SK-N-SH (cell line): ENCODE measurements at regions of chr7 and their contacts with region 1.

Region 1: GRCh38 chr7:43260980-43261878 is 148.8 kb downstream of the HECW1 start:
- DNase-seq: peak; percentile 81
- H3K4me3 ChIP-seq: no peak overlapping the region; a peak in 1 of 4 replicates
- H3K27ac ChIP-seq: no peak overlapping the region
- H3K4me1 ChIP-seq: no peaks in the 10 kb centered on the region
- H3K27me3 ChIP-seq: peaks cover 9% of the 10 kb centered on the region; the same call in 1 of the 2 replicates
- CTCF ChIP-seq: peak; percentile 100
- EP300 ChIP-seq: no peak
- RAD21 ChIP-seq: peak; percentile 89

Region 2: DNA sequence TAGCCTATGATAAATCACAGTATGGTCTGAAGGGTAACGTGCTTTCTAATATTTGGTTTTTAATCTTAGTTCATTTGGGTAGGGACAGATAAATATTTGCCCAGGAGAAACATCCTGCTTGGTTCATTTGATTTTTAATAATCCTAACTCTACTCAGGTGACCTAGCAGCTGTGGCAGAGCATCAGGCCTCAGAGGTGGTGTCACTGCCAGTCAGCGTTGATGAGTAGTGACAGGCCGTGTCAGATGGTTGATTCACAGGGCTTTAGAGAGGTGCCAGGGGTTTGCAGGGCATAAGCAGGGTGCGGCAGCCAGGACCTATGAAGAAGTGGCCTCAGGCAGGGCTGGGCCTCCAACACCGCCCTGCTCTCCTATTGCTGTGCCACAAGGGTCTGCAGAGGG is 20.7 kb before region 1 on chr7:
- CTCF ChIA-PET with region 1: interaction called, 23 read pairs
- POLR2A ChIA-PET with region 1: no interaction called
- DNase-seq: no peak
- H3K4me3 ChIP-seq: no peak overlapping the region
- H3K27ac ChIP-seq: no peak overlapping the region
- H3K4me1 ChIP-seq: no peaks in the 10 kb centered on the region
- H3K27me3 ChIP-seq: peaks cover 35% of the 10 kb centered on the region
- CTCF ChIP-seq: no peak
- EP300 ChIP-seq: no peak
- RAD21 ChIP-seq: no peak

Region 3: GRCh38 chr7:43248961-43249822 is 12.0 kb before region 1 on chr7:
- CTCF ChIA-PET with region 1: interaction called, 61 read pairs
- POLR2A ChIA-PET with region 1: no interaction called
- DNase-seq: no peak
- H3K4me3 ChIP-seq: no peak overlapping the region
- H3K27ac ChIP-seq: no peak overlapping the region
- H3K4me1 ChIP-seq: no peaks in the 10 kb centered on the region
- H3K27me3 ChIP-seq: peaks cover 24% of the 10 kb centered on the region
- CTCF ChIP-seq: no peak
- EP300 ChIP-seq: no peak
- RAD21 ChIP-seq: no peak

Region 4: GRCh38 chr7:43278088-43278644 is 16.9 kb after region 1 on chr7:
- CTCF ChIA-PET with region 1: interaction called, 52 read pairs
- POLR2A ChIA-PET with region 1: no interaction called
- DNase-seq: no peak
- H3K4me3 ChIP-seq: no peak overlapping the region
- H3K27ac ChIP-seq: no peak overlapping the region
- H3K4me1 ChIP-seq: peaks cover 0 to 11% of the 10 kb centered on the region in 2 experiments; a peak in 1 of 4 replicates
- H3K27me3 ChIP-seq: peaks cover 12% of the 10 kb centered on the region; the same call in 1 of the 2 replicates
- CTCF ChIP-seq: no peak
- EP300 ChIP-seq: peak in 1 of 2 experiments; percentile 91; a peak in 2 of 4 replicates
- RAD21 ChIP-seq: no peak

Region 5: DNA sequence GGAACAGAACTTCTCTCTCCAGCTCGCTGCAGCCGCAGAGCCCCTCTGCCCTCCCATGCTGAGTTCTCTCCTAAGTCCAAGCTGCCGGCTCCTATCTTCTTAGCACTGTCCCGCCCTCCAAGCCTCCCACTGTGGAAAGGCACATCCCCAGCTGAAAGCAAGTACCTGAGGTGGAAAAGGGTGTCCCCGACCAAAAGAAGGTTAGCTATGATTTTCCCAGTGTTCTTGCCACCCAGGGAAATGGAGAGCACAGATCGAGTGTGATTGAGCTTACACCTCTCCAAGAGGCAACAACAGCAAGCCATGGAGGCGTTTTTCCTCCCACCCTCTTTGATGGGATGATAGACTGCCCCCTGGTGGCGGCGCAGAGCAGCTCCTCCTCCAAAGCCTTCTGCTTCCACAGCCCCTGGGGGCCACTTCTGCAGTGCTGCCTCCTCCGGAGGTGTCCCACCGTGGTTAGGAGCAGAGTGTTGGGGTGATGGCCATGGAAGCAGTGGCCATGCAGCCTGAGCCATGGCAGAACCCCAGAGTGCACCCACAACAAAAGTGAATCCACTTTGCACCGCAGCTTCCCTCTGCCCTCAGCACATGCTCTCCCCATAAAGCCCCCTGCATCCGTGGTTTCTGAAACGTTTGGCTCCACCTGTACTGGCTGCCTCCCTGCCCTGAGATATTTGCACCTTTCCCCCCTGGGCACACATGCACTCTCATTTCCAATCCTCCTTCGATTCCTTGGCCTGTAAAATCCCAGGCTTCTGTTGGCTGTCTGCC is 178.6 kb after region 1 on chr7:
- CTCF ChIA-PET with region 1: interaction called, 12 read pairs
- POLR2A ChIA-PET with region 1: no interaction called
- DNase-seq: peak; percentile 76
- H3K4me3 ChIP-seq: no peak overlapping the region
- H3K27ac ChIP-seq: no peak overlapping the region
- H3K4me1 ChIP-seq: peaks cover 0 to 5% of the 10 kb centered on the region in 2 experiments; a peak in 2 of 4 replicates
- H3K27me3 ChIP-seq: no peaks in the 10 kb centered on the region; the same call in 1 of the 2 replicates
- CTCF ChIP-seq: peak; percentile 89
- EP300 ChIP-seq: no peak
- RAD21 ChIP-seq: peak; percentile 56